ENCODE measurements at regions of chr12 and their contacts with region 1.

Region 1: DNA sequence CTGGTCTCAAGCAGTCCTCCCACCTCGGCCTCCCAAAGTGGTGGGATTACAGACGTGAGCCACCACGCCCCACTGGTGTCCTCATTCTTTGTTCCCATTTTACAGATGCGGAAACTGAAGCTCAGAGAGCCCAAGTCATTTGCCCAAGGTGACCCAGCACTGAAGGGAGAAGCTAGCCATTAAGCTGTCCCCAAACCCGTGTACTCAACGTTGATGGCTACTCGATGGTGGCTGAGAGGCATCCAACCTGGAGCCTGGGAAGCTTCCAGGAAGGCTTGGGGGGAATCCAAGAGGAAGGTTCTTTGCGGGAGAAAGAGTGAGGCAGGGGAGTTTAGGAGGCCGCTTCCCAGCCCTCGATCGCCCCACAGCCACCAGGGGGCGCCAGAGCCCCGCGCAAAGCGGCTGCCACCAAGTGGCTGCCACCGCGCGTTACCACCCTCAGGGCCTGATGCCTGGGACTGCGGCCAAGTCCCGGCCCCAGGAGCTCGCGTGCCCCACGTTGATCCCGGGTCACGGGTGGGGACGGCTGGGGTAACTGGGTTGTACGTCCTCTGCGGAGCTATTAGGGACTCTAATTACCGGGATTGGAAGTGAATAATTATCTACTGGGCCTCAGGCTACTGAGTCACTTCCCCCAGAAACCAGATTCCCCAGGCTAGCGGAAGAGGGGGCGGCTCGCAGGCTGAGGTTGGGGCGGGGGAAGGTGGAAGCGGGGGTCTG is 8.8 kb upstream of the SH2B3 start:
- DNase-seq: peak; percentile 72
- H3K4me3 ChIP-seq: peak overlapping the region in 1 of 2 donors; percentile 8
- H3K27ac ChIP-seq: no peak overlapping the region
- H3K4me1 ChIP-seq: no peaks in the 10 kb centered on the region
- H3K27me3 ChIP-seq: no peaks in the 10 kb centered on the region
- CTCF ChIP-seq: peak; percentile 98 to 99 (median 98)
- POLR2A ChIP-seq: no peak

Region 2: GRCh38 chr12:111377440-111377839 is 19.4 kb before region 1 on chr12:
- intact Hi-C with region 1: no loop called
- DNase-seq: no peak
- H3K4me3 ChIP-seq: no peak overlapping the region
- H3K27ac ChIP-seq: no peak overlapping the region
- H3K4me1 ChIP-seq: no peaks in the 10 kb centered on the region
- H3K27me3 ChIP-seq: no peaks in the 10 kb centered on the region
- CTCF ChIP-seq: no peak
- POLR2A ChIP-seq: no peak

Region 3: GRCh38 chr12:111529424-111530368 is 132.8 kb after region 1 on chr12:
- intact Hi-C with region 1: loop called (anchors 10 kb)
- DNase-seq: no peak
- H3K4me3 ChIP-seq: no peak overlapping the region
- H3K27ac ChIP-seq: no peak overlapping the region
- H3K4me1 ChIP-seq: no peaks in the 10 kb centered on the region
- H3K27me3 ChIP-seq: no peaks in the 10 kb centered on the region
- CTCF ChIP-seq: peak in 3 of 4 experiments; percentile 49 to 58 (median 56)
- POLR2A ChIP-seq: no peak

Region 4: DNA sequence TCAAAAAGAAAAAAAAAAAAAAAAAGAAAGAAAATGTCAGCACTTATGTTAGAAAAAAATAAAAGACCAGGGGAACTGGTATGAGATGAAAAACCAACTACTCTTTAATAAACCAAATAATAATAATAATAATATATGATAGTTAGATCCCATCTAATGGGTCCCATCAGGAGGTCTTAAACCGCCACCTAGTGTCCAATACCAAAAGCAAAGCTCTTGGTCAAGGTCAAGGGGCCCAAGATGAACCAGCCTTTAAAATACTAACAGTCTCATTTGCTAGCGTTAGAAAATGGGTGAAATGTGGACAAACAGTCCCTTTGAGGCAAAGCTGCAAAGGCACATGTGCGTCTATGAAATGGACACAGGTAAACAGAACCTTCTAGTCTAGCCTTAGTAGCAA is 276.6 kb after region 1 on chr12:
- intact Hi-C with region 1: loop called (anchors 2 kb)
- DNase-seq: no peak
- H3K4me3 ChIP-seq: no peak overlapping the region
- H3K27ac ChIP-seq: no peak overlapping the region
- H3K4me1 ChIP-seq: no peaks in the 10 kb centered on the region
- H3K27me3 ChIP-seq: no peaks in the 10 kb centered on the region
- CTCF ChIP-seq: peak in 1 of 4 experiments; percentile 21
- POLR2A ChIP-seq: no peak